ENCODE measurements at regions of chr19 and their contacts with region 1.

Region 1: DNA sequence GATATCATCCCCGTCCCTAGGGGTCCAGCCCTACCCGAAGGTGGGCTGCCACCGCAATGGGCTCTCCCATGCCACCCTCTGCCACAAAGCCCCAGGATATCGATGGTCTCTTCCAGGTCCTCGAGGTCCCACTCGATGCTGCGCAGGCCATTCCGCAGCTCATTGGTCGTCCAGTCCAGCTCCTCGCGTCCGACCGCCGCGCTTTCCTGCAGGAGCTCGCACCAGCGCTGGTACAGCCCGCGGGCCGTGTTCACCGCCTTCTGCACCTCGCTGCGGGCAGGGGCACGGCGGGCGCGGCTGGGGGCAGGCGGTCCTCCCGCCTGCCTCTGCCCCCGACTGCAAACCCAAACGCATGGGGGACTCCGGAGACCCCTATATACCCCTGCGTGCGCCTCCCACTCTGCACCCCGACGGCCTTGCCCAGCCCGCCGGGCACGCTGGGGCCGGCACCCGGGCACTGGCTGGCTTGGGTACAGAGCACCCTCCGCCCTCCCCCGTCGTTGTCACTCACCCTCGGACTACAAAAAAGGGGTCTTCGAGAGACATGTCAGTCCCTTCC is 468 bp downstream of the STX10 start:
- DNase-seq: peak; percentile 63 to 73
- H3K4me3 ChIP-seq: peak overlapping the region; percentile 54 to 79 (median 62)
- H3K27ac ChIP-seq: peak overlapping the region; percentile 83 to 99 (median 98)
- H3K4me1 ChIP-seq: peaks cover 4 to 5% of the 10 kb centered on the region in 2 donors
- H3K27me3 ChIP-seq: no peaks in the 10 kb centered on the region
- CTCF ChIP-seq: no peak
- POLR2A ChIP-seq: no peak

Region 2: DNA sequence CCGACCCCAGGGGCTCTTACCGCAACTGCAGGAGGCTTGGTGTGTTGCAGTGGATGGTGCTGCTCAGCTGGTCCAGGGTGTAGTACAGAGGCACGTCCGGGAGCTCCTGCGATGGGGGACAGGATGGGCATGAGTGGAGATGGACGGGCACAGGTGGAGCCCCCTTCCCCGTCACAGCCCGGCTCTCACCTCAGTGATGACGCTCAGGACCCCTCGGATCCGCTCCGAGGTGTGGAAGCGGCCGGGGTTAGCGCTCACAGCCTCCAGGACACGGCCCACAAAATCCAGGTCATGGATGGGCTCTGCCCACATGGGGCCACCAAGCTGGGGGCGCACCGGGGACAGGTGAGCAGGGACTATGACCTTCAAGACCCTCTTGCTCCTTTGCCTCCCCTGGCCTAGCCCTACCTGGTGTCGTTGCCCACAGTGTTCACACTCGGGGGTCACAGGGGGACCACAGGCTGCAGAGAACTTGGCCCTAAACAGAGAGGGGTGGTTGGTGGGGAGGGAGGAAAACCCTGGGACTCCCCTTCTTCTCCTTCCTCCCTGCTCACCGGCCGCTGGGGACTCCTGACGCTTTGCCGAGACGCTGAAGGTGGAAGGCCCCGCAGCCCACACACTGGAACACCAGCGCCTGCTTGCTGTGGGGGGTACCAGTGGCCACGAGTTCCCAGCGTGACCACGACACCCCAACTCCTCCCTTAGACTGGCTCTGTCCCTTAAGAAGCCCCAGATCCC is 40.2 kb before region 1 on chr19:
- intact Hi-C with region 1: loop called (anchors 5 kb)
- DNase-seq: no peak
- H3K4me3 ChIP-seq: no peak overlapping the region
- H3K27ac ChIP-seq: no peak overlapping the region
- H3K4me1 ChIP-seq: no peaks in the 10 kb centered on the region
- H3K27me3 ChIP-seq: no peaks in the 10 kb centered on the region
- CTCF ChIP-seq: no peak
- POLR2A ChIP-seq: no peak

Region 3: GRCh38 chr19:13404236-13404635 is 254.5 kb after region 1 on chr19:
- intact Hi-C with region 1: no loop called
- DNase-seq: no peak
- H3K4me3 ChIP-seq: no peak overlapping the region
- H3K27ac ChIP-seq: no peak overlapping the region
- H3K4me1 ChIP-seq: no peaks in the 10 kb centered on the region
- H3K27me3 ChIP-seq: no peaks in the 10 kb centered on the region
- CTCF ChIP-seq: no peak
- POLR2A ChIP-seq: no peak

Measured in thyroid gland (tissue), 4 donors.